Gastrocnemius medialis (tissue), 4 donors: ENCODE measurements at regions of chr17 and their contacts with region 1.

Region 1: DNA sequence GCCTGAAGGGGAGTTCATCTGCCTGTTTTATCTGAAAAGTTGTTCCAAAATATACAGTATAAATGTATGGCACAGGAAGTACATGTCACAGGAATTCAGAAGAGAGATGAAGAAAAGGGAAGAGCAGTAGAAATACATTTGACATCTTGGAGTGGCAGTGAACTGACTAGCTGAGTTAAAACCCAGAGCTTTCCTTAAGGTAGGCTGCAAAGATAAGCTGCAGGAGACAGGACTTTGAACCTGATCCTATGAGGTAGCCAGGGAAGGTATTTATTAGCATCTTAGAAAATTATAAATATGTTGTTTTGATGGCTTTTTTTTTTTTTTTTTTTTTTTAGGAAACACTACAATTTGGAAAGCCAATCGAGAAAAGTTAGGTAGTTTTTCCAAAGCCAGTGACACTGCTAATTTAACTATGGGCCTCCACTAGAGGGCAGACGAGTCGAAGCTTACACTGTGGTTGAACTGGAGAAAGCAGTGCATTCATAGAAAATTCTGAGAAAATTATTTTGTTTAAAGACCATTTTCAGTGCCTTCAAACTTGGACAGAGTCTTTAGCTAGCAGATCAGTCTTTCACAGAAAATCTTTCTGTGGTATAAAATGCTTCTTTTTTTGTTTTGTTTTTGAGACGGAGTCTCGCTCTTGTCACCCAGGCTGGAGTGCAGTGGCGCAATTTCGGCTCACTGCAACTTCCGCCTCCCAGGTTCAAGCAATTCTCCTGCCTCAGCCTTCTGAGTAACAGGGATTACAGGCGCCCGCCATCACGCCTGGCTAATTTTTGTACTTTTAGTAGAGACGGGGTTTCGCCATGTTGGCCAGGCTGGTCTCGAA is 122.3 kb downstream of the SSH2 start:
- DNase-seq: peak; percentile 36 to 39
- ATAC-seq: peak; percentile 73 to 85
- H3K4me3 ChIP-seq: no peak overlapping the region
- H3K27ac ChIP-seq: no peak overlapping the region
- H3K4me1 ChIP-seq: no peaks in the 10 kb centered on the region
- H3K27me3 ChIP-seq: no peaks in the 10 kb centered on the region
- CTCF ChIP-seq: peak; percentile 58 to 74 (median 71)
- POLR2A ChIP-seq: no peak

Region 2: GRCh38 chr17:30021708-30022317 is 214.1 kb after region 1 on chr17:
- in situ Hi-C with region 1: loop called in 1 of 4 experiments (anchors 10 kb)
- intact Hi-C with region 1: loop called (anchors 2 kb)
- DNase-seq: no peak
- ATAC-seq: no peak
- H3K4me3 ChIP-seq: peak overlapping the region in 1 of 4 donors; percentile 10
- H3K27ac ChIP-seq: no peak overlapping the region
- H3K4me1 ChIP-seq: no peaks in the 10 kb centered on the region
- H3K27me3 ChIP-seq: no peaks in the 10 kb centered on the region
- CTCF ChIP-seq: peak; percentile 51 to 76 (median 58)
- POLR2A ChIP-seq: no peak